HCT116 (cell line): ENCODE measurements at regions of chr10 and their contacts with region 1.

Region 1: DNA sequence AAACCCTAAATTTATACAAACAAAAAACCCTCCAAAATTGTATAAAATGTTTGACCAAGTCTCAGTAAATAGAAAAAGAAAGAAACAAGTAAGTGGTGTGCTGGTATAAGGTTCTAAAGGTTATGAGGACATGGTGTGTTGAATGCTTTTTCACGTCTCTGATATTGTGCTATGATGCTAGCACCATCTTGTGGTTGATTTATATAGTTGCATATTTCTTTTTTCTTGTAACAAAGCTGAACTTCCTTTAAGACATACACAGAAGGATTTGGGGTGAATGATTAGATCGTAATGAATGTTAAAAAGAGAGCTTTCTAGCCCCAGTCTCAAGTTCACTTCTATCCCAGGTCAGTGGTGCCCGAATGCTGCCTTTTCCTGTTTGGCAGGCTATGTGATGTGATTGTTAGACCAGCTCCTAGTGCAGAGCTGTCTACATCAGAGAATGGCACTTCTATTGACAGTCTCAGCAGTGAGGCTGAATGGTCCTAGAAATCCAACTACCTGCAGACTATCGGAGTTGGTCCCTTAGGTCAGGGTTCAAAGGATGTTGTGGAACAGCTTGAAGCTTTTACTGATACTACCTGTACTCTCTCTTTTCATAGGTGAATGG is 25.0 kb downstream of the VTI1A start:
- DNase-seq: peak; percentile 72
- ATAC-seq: peak; percentile 81
- H3K4me3 ChIP-seq: no peak overlapping the region
- H3K27ac ChIP-seq: peak overlapping the region; percentile 32
- H3K4me1 ChIP-seq: peaks cover 30 to 42% of the 10 kb centered on the region in 2 experiments
- H3K27me3 ChIP-seq: no peaks in the 10 kb centered on the region
- CTCF ChIP-seq: peak; percentile 72 to 93 (median 84)
- POLR2A ChIP-seq: no peak
- RAD21 ChIP-seq: peak; percentile 96

Region 2: DNA sequence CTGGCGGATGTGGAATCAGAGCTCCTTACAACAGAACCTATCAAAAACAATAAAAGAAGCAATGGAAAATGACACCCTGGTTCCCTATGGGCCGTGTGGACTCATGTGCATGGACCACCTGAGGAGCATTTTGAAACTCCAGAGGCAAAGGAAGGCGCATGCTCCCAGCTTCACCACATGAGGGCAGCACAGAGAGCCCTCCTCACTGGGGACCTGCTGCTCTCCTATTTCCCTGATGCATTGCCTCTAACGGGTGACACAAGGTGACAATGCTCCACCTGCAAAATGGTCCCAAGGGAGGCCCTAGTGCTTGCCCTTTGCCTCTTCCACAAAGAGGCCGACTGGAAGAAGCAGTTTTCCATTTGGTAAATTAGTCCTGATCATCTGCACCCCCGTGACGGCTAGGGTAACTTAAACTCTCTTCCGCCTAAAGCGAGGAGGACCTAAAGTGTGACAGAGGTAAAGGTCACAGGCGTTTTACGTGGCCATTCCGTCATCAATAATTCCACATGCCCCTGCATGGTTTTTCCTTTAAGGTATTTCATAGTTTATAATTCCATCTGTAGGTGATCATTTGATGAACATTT is 356.1 kb before region 1 on chr10:
- CTCF ChIA-PET with region 1: interaction called, 10 read pairs
- POLR2A ChIA-PET with region 1: no interaction called
- RAD21 ChIA-PET with region 1: no interaction called
- intact Hi-C with region 1: no loop called
- DNase-seq: peak; percentile 42
- ATAC-seq: peak; percentile 98
- H3K4me3 ChIP-seq: no peak overlapping the region
- H3K27ac ChIP-seq: no peak overlapping the region
- H3K4me1 ChIP-seq: no peaks in the 10 kb centered on the region
- H3K27me3 ChIP-seq: peaks cover 4% of the 10 kb centered on the region
- CTCF ChIP-seq: peak; percentile 82 to 99 (median 97)
- POLR2A ChIP-seq: no peak
- RAD21 ChIP-seq: peak; percentile 73

Region 3: GRCh38 chr10:112434988-112435619 is 36.9 kb before region 1 on chr10:
- CTCF ChIA-PET with region 1: interaction called, 22 read pairs
- POLR2A ChIA-PET with region 1: no interaction called
- RAD21 ChIA-PET with region 1: interaction called, 5 to 6 read pairs
- intact Hi-C with region 1: no loop called
- DNase-seq: peak; percentile 55
- ATAC-seq: peak; percentile 65
- H3K4me3 ChIP-seq: no peak overlapping the region
- H3K27ac ChIP-seq: no peak overlapping the region
- H3K4me1 ChIP-seq: peaks cover 4 to 18% of the 10 kb centered on the region in 2 experiments; a peak in 3 of 4 replicates
- H3K27me3 ChIP-seq: no peaks in the 10 kb centered on the region
- CTCF ChIP-seq: peak; percentile 13 to 93 (median 82); a peak in 5 of 6 replicates
- POLR2A ChIP-seq: no peak
- RAD21 ChIP-seq: peak; percentile 98

Region 4: DNA sequence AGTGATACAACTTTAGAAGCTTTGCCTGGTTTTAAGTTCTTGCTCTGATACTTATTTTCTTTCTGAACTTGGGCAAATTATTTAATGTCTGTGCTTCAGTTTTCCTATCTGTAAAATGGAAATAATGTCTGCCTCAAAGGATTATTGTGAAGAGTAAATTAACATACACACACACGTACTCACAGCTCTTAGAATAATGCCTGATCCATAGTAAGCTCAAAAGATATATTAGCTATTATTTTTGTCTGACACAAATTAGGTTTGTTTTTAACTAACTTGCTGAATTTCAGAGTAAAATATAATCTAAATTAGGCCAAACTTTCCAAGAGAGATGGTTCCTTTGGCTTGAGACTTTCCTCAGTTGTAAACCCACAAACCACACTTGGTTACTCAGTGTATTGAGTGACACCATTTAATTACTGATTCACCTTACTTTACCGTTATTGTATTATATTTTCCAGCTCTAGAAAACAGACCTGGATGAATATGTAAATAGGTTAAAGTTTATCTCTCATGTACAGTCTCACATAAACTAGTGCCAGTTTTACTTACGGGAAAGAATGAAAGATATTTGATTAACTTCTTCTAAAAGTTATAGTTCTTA is 25.5 kb after region 1 on chr10:
- CTCF ChIA-PET with region 1: interaction called, 10 read pairs
- POLR2A ChIA-PET with region 1: no interaction called
- RAD21 ChIA-PET with region 1: no interaction called
- intact Hi-C with region 1: no loop called
- DNase-seq: no peak
- ATAC-seq: no peak
- H3K4me3 ChIP-seq: no peak overlapping the region
- H3K27ac ChIP-seq: peak overlapping the region; percentile 3; the same call in 1 of the 2 replicates
- H3K4me1 ChIP-seq: peaks cover 87 to 95% of the 10 kb centered on the region in 2 experiments
- H3K27me3 ChIP-seq: no peaks in the 10 kb centered on the region
- CTCF ChIP-seq: no peak
- POLR2A ChIP-seq: no peak
- RAD21 ChIP-seq: no peak

Region 5: GRCh38 chr10:113108212-113108835 is 636.3 kb after region 1 on chr10:
- CTCF ChIA-PET with region 1: no interaction called
- POLR2A ChIA-PET with region 1: no interaction called
- RAD21 ChIA-PET with region 1: no interaction called
- intact Hi-C with region 1: loop called (anchors 1 kb)
- DNase-seq: no peak
- ATAC-seq: peak; percentile 87
- H3K4me3 ChIP-seq: no peak overlapping the region
- H3K27ac ChIP-seq: no peak overlapping the region
- H3K4me1 ChIP-seq: peaks cover 14 to 38% of the 10 kb centered on the region in 2 experiments; a peak in 3 of 4 replicates
- H3K27me3 ChIP-seq: no peaks in the 10 kb centered on the region
- CTCF ChIP-seq: peak in 2 of 3 experiments; percentile 94 to 98; a peak in 5 of 6 replicates
- POLR2A ChIP-seq: no peak
- RAD21 ChIP-seq: peak; percentile 71

Region 6: GRCh38 chr10:113521123-113521795 is 1049.3 kb after region 1 on chr10:
- CTCF ChIA-PET with region 1: interaction called, 8 read pairs
- POLR2A ChIA-PET with region 1: no interaction called
- RAD21 ChIA-PET with region 1: interaction called, 3 to 5 read pairs
- intact Hi-C with region 1: loop called (anchors 1 kb)
- DNase-seq: peak; percentile 75
- ATAC-seq: peak; percentile 90
- H3K4me3 ChIP-seq: no peak overlapping the region
- H3K27ac ChIP-seq: no peak overlapping the region
- H3K4me1 ChIP-seq: peaks cover 9 to 11% of the 10 kb centered on the region in 2 experiments; a peak in 3 of 4 replicates
- H3K27me3 ChIP-seq: no peaks in the 10 kb centered on the region
- CTCF ChIP-seq: peak; percentile 91 to 100 (median 100)
- POLR2A ChIP-seq: no peak
- RAD21 ChIP-seq: peak; percentile 99